A549 (cell line): ENCODE measurements at regions of chr12 and their contacts with region 1.

Region 1: GRCh38 chr12:56152318-56153033 is at the start of gene MYL6B:
- DNase-seq: peak; percentile 94
- ATAC-seq: peak; percentile 89 to 93
- H3K4me3 ChIP-seq: peak within 1 kb of the TSS; percentile 53
- H3K27ac ChIP-seq: peak within 1 kb of the TSS; percentile 92 to 93
- H3K4me1 ChIP-seq: peaks cover 21% of the 10 kb centered on the region; the same call in 2 of the 3 replicates
- CTCF ChIP-seq: no peak
- EP300 ChIP-seq: no peak
- POLR2A ChIP-seq: peak; percentile 71
- RAD21 ChIP-seq: no peak
- polyA plus RNA-seq, gene MYL6B: 48.2 and 67.0 TPM in 2 replicates

Region 2: GRCh38 chr12:56097738-56098137 is 54.7 kb before region 1 on chr12:
- CTCF ChIA-PET with region 1: no interaction called
- POLR2A ChIA-PET with region 1: no interaction called
- DNase-seq: no peak
- ATAC-seq: no peak
- H3K4me3 ChIP-seq: no peak overlapping the region
- H3K27ac ChIP-seq: no peak overlapping the region
- H3K4me1 ChIP-seq: no peaks in the 10 kb centered on the region
- CTCF ChIP-seq: no peak
- EP300 ChIP-seq: no peak
- POLR2A ChIP-seq: no peak
- RAD21 ChIP-seq: no peak

Region 3: DNA sequence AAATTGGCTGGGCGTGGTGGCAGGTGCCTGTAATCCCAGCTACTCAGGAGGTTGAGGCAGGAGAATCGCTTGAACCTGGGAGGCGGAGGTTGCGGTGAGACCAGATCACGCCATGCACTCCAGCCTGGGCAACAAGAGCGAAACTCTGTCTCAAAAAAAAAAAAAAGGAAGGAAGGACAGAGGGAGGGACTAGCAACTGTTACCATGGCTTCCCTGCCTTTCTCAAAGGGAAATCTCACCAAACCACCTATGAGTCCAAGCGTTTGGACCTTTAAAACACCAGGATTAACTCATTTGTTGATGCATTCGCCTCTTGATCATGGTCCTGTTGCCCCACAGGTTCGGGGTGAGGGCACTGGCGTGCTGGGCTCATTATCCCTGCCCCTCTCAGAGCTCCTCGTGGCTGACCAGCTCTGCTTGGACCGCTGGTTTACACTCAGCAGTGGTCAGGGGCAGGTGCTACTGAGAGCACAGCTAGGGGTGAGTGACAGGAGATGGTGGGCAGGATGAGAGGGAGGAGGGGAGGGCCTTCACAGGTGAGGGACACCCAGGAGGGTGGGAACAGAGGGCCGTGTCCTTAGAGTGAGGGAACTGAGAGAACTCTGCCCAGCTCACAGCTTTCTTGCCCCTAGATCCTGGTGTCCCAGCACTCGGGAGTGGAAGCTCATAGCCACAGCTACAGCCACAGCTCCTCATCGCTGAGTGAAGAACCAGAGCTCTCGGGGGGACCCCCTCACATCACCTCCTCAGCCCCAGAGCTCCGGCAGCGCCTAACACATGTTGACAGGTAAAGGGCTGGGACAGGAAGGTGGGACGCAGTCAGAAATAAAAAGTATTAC is 10.3 kb before region 1 on chr12:
- CTCF ChIA-PET with region 1: interaction called, 15 read pairs
- POLR2A ChIA-PET with region 1: interaction called, 4 read pairs
- DNase-seq: no peak
- ATAC-seq: 0 out of 6 replicates have a peak, but pooled peaks of 1 of the 2 experiments have one; percentile 19
- H3K4me3 ChIP-seq: no peak overlapping the region
- H3K27ac ChIP-seq: no peak overlapping the region
- H3K4me1 ChIP-seq: no peaks in the 10 kb centered on the region
- CTCF ChIP-seq: no peak
- EP300 ChIP-seq: no peak
- POLR2A ChIP-seq: no peak
- RAD21 ChIP-seq: no peak